A549 (cell line): ENCODE measurements at regions of chr3 and their contacts with region 1.

Region 1: GRCh38 chr3:196317687-196318467 is at the start of gene DYNLT2B:
- DNase-seq: peak; percentile 83 to 88
- ATAC-seq: peak; percentile 93 to 94
- H3K4me3 ChIP-seq: peak within 1 kb of the TSS; percentile 54
- H3K27ac ChIP-seq: peak within 1 kb of the TSS; percentile 79 to 96
- H3K4me1 ChIP-seq: peaks cover 5% of the 10 kb centered on the region; the same call in 1 of the 3 replicates
- CTCF ChIP-seq: no peak
- EP300 ChIP-seq: no peak
- POLR2A ChIP-seq: peak; percentile 68
- RAD21 ChIP-seq: 0 out of 5 replicates have a peak, but pooled peaks of 1 of the 2 experiments have one; percentile 1
- polyA plus RNA-seq, gene DYNLT2B: 24.0 and 34.7 TPM in 2 replicates

Region 2: DNA sequence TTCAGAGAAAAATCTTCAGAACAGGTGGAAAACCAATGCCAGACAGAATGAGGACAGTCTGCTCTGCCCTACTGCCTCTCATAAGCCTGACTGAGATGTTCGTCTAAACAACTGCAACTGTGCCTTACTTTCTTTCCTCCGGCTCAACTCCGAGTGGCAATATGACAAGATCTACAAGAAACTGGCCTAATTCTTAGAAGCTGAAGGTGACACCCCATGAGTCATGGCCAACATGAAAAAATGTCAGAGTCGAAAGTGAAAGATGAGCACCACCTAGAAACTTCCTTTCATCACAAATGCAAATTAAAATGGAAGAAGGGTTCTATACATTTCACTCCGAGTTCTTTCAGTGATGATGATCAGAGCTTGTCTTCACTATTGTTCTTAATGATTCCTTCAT is 43.3 kb before region 1 on chr3:
- CTCF ChIA-PET with region 1: no interaction called
- POLR2A ChIA-PET with region 1: no interaction called
- DNase-seq: no peak
- ATAC-seq: no peak
- H3K4me3 ChIP-seq: no peak overlapping the region
- H3K27ac ChIP-seq: no peak overlapping the region
- H3K4me1 ChIP-seq: peaks cover 12% of the 10 kb centered on the region
- CTCF ChIP-seq: no peak
- EP300 ChIP-seq: no peak
- POLR2A ChIP-seq: no peak
- RAD21 ChIP-seq: no peak

Region 3: GRCh38 chr3:196339044-196339443 is 21.2 kb after region 1 on chr3:
- CTCF ChIA-PET with region 1: no interaction called
- POLR2A ChIA-PET with region 1: interaction called, 12 read pairs
- DNase-seq: no peak
- ATAC-seq: no peak
- H3K4me3 ChIP-seq: no peak overlapping the region; the same call in 2 of the 3 replicates
- H3K27ac ChIP-seq: peak overlapping the region; percentile 88 to 90
- H3K4me1 ChIP-seq: peaks cover 48% of the 10 kb centered on the region
- CTCF ChIP-seq: no peak
- EP300 ChIP-seq: no peak
- POLR2A ChIP-seq: no peak
- RAD21 ChIP-seq: no peak